ENCODE measurements at regions of chr17 and their contacts with region 1.

Region 1: GRCh38 chr17:49694847-49695683 is 12.7 kb downstream of the SLC35B1 start:
- DNase-seq: peak; percentile 53 to 92
- H3K4me3 ChIP-seq: no peak overlapping the region
- CTCF ChIP-seq: peak in 1 of 3 donors; percentile 90
- POLR2A ChIP-seq: no peak

Region 2: DNA sequence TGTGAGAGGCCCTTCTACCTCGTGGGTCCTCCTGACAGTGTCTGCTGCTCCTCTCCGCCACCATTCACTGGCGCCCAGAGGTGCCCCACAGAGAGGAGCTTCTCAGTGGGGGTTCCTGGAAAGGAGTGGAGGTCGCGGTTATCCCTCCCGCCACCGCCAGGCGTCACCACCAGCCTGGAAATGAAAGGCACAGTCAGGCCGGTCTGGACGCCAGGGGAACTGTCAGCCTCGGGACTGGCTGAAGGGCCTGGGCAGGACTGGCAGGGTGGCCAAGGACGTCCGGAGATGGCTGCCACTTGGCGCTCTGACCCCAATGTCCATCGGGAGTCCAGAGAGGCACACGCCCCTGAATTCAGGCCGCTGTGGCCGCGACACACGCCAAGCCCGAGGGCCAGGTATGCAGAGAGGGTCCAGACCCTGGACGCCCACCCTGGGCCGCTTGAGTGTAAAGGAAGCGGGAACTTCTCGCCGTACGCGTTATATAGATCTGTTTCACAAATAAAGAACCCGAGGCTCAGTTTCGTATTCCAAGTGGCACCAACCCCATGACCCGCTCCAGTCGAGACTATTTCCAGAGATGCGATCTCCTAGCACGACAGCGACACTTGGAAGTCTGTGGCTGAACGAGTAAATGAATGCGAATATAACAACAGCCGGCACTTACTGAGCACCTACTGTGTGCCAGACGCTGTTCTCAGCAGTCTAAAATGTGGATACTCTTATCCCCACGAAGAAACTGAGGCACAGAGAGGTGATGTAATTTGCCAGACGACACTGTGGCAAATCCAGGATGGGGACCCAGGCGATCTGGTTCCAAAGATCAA is 127.0 kb before region 1 on chr17:
- intact Hi-C with region 1: loop called (anchors 2 kb)
- DNase-seq: peak; percentile 83 to 98
- H3K4me3 ChIP-seq: no peak overlapping the region
- CTCF ChIP-seq: peak in 1 of 3 donors; percentile 98
- POLR2A ChIP-seq: no peak